ENCODE measurements at regions of chr11 and their contacts with region 1.

Region 1: GRCh38 chr11:8006349-8006977 is 19.3 kb downstream of the EIF3F start:
- DNase-seq: peak; percentile 59 to 71 (median 67)
- ATAC-seq: peak; percentile 96
- H3K4me3 ChIP-seq: no peak overlapping the region
- H3K27ac ChIP-seq: no peak overlapping the region
- H3K4me1 ChIP-seq: no peaks in the 10 kb centered on the region
- H3K27me3 ChIP-seq: peaks cover 0 to 17% of the 10 kb centered on the region in 2 experiments; a peak in 2 of 5 replicates
- CTCF ChIP-seq: peak; percentile 84 to 91 (median 86)
- EP300 ChIP-seq: no peak
- POLR2A ChIP-seq: no peak
- RAD21 ChIP-seq: peak; percentile 89 to 91

Region 2: DNA sequence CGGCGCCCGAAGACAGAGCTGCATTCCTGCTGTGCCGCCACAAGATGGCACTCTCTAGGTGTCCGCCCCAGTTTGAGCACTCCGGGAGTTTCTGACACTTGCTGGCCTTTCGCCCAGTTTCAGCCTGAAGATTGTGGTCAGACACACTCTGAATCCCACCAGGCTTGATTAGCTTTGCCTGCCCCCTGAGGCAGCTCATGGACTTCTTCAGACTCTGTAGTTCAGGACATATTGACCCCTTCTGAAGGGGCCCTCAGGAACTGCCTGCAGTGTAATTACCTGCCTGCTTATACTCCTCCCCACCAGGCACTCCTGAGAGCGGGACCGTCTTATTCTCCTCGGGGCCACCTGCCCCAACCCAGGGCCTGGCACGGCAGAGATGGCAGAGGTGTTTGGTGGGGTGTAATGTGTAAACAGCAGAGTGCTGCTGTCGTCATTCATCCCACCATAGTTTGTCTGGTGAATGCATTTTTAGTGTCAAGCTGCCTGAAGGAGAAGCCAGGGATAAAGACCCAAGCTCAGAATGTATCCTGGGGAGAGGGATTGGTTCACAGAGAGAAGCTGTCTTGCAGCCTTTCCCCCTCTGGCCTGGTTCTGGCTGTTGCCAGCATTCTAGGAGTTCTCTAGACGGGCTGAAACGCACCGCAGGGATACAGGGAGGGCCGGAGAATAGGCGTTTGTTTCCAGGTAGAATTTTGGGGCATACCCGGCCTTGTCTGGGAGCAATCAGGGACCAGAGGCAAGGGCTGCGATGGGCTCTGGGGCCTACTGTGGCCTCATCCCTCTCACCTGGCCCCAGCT is 27.0 kb after region 1 on chr11:
- CTCF ChIA-PET with region 1: no interaction called
- POLR2A ChIA-PET with region 1: no interaction called
- in situ Hi-C with region 1: no loop called
- intact Hi-C with region 1: loop called (anchors 2 kb)
- DNase-seq: peak; percentile 76 to 82 (median 80)
- ATAC-seq: peak; percentile 93
- H3K4me3 ChIP-seq: no peak overlapping the region
- H3K27ac ChIP-seq: no peak overlapping the region
- H3K4me1 ChIP-seq: no peaks in the 10 kb centered on the region; a peak in 2 of 5 replicates
- H3K27me3 ChIP-seq: peaks cover 14 to 53% of the 10 kb centered on the region in 2 experiments; a peak in 4 of 5 replicates
- CTCF ChIP-seq: peak; percentile 84 to 90 (median 87)
- EP300 ChIP-seq: no peak
- POLR2A ChIP-seq: no peak
- RAD21 ChIP-seq: peak; percentile 72 to 79

Region 3: DNA sequence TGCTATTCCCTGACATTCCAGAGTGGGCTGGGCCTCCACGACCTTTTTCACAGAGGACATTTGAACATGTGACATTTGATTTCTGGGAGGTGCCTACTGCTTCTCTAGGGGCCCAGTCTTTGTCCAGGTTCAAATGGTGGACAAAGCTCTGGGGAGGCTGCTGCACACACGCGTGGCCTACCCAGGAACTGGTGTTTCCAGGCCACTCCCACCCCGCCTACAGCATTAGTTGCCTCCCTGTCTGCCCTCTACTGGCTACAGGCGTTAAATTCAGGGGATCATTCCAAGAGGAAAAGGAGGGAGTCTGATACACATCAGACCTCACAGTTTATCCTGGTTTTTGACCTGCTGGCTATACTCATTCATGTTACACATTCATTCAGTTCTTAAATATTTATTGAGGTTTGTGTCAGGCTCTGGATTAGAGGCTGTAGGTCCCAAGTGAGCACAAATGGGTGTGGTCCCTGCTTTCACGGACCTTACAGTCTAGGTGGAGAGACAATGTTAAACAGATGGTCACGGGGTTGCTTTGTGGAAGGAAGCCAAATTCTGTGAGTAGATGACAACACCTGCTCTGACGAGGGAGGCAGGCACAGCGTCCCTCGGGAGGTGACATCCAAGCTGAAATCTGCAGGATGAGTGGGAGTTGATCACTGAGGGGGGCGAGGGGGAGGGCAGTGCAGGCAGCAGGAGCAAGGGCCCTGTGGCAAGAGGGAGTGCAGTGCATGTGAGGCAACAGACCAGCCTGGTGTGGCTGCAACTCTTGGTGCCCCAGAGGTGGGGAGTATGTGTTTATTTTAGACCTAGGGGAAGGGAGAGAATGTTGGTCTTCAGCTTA is 86.3 kb after region 1 on chr11:
- CTCF ChIA-PET with region 1: interaction called, 17 read pairs
- POLR2A ChIA-PET with region 1: interaction called, 4 read pairs
- in situ Hi-C with region 1: loop called (anchors 5 kb)
- intact Hi-C with region 1: loop called (anchors 1 kb)
- DNase-seq: peak; percentile 73 to 88 (median 82)
- ATAC-seq: peak; percentile 94
- H3K4me3 ChIP-seq: no peak overlapping the region
- H3K27ac ChIP-seq: no peak overlapping the region
- H3K4me1 ChIP-seq: peaks cover 0 to 3% of the 10 kb centered on the region in 2 experiments; a peak in 2 of 5 replicates
- H3K27me3 ChIP-seq: peaks cover 0 to 51% of the 10 kb centered on the region in 2 experiments; a peak in 3 of 5 replicates
- CTCF ChIP-seq: peak; percentile 75 to 77 (median 75)
- EP300 ChIP-seq: no peak
- POLR2A ChIP-seq: no peak
- RAD21 ChIP-seq: peak; percentile 32 to 47

Region 4: GRCh38 chr11:8209208-8209807 is 202.8 kb after region 1 on chr11:
- CTCF ChIA-PET with region 1: interaction called, 5 read pairs
- POLR2A ChIA-PET with region 1: no interaction called
- in situ Hi-C with region 1: no loop called
- intact Hi-C with region 1: loop called (anchors 1 kb)
- DNase-seq: peak; percentile 63 to 75 (median 71)
- ATAC-seq: peak; percentile 76
- H3K4me3 ChIP-seq: no peak overlapping the region
- H3K27ac ChIP-seq: no peak overlapping the region
- H3K4me1 ChIP-seq: peaks cover 11 to 22% of the 10 kb centered on the region in 2 experiments; a peak in 4 of 5 replicates
- H3K27me3 ChIP-seq: peaks cover 4 to 20% of the 10 kb centered on the region in 2 experiments; a peak in 4 of 5 replicates
- CTCF ChIP-seq: peak; percentile 71 to 90 (median 88)
- EP300 ChIP-seq: no peak
- POLR2A ChIP-seq: no peak
- RAD21 ChIP-seq: peak; percentile 62 to 69

Region 5: DNA sequence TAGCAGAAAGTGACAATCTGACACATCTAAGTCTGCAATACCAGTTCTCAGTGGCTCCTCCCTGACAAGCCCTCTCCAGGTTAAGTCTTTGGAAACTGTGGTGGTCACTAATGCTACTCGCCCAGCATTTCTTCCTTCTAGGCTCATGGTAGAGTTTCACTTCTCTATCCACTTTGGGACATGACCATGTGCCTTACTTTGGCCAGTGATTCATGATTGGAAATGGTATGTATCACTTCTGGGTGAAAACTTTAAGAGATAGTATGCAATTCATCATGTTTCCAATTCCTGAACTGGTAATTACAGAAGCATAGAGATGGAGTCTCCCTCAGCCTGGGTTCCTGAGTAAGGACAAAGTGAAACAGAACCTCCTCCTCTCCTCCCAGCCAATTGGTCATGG is 408.7 kb after region 1 on chr11:
- CTCF ChIA-PET with region 1: no interaction called
- POLR2A ChIA-PET with region 1: no interaction called
- in situ Hi-C with region 1: no loop called
- intact Hi-C with region 1: no loop called
- DNase-seq: no peak
- ATAC-seq: no peak
- H3K4me3 ChIP-seq: no peak overlapping the region
- H3K27ac ChIP-seq: no peak overlapping the region
- H3K4me1 ChIP-seq: no peaks in the 10 kb centered on the region
- H3K27me3 ChIP-seq: no peaks in the 10 kb centered on the region; a peak in 1 of 5 replicates
- CTCF ChIP-seq: no peak
- EP300 ChIP-seq: no peak
- POLR2A ChIP-seq: no peak
- RAD21 ChIP-seq: no peak